Left colon (tissue), 2 donors: ENCODE measurements at regions of chr1 and their contacts with region 1.

Region 1: DNA sequence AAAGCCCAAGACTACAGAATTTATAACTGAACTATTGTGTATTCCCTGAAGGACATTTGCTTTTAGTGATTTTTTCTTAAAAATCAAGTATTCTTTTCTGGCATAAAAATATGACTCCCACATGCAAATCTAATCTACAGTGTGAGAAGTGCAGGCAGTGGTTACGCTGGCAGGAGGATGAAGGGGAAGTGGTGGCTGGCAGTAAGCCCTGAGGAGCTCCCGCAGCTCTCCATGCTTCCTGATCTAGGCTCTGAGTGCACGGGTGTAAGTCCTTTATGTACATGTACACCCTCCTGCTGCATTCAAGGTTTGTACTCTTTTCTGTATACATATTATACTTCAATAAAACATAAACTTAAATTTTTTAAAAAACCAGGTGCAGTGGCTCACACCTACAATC is 67.5 kb upstream of the PRDX6 start:
- DNase-seq: peak in 1 of 2 donors; percentile 40
- ATAC-seq: no peak

Region 2: GRCh38 chr1:172745014-172745413 is 664.6 kb before region 1 on chr1:
- intact Hi-C with region 1: loop called in 1 of 2 experiments (anchors 10 kb)
- DNase-seq: no peak
- ATAC-seq: peak; percentile 87

Region 3: DNA sequence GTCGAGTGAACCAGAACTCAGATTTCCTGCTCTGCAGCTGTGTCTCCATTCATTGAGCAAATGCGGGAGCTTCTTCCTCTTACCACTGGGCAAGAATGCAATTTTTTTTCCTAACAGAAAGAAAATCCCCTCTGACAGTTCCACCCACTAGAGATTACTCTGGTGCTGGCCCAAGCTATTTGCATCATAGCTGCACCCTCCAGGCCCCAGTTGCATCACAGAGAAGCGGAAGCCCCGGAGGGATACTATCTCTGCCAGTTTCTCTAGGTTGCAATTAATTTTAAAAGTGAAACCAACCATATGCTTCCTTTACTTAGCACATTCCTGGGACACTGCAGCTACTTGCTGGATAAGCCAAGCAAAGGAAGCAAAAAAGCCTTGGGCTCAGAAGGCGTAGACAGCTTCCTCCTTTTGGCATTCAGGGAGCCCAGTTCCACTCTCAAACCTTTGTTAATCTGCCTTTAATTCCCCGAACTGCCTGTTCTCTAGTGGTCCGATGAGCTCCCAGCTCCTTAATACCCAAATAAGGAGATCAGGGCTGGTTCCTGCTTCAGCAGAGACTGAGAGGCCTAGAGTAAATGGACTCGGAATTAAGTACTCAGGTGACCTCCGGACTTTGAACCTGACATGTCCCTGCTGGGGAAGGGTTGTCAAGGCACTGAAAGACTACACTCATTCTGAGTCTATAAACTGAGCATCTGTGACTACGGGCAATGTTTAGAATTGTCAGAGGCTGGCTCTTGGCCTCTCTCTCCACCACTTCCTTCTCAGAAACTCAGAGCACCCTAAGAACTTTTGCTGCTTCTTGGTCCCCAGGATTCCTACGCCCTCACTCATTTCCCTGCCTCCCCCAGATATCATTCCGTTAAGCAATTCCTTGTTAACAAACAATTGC is 286.4 kb before region 1 on chr1:
- intact Hi-C with region 1: no loop called
- DNase-seq: peak; percentile 47 to 69
- ATAC-seq: peak; percentile 97